T-cell (primary cell): ENCODE measurements at regions of chr3 and their contacts with region 1.

Region 1: DNA sequence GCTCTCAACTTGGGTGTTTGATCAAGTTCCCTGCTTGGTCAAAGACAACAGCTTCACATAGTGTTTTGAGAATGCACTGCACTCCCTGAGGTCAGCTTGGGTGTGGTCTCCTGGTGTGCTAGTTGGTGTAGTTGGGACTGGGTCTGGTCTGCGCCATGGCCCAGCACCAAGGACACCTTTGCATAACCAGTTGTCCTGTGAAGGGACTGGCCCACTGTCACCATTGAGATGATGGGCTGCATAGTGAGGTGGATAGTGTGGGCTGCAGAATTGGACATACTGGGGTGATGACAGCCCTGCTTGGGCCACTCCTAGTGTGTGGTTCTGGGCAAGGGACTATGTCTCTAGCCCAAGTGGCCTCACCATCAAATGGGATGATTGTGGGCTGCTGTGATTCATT is 9.5 kb downstream of the RPSA start:
- DNase-seq: no peak
- ATAC-seq: peak in 1 of 4 experiments; percentile 22
- H3K4me3 ChIP-seq: no peak overlapping the region
- H3K4me3 Mint-ChIP-seq: no peak overlapping the region
- H3K27ac ChIP-seq: no peak overlapping the region
- H3K27ac Mint-ChIP-seq: peak overlapping the region; percentile 46 to 55
- H3K4me1 ChIP-seq: peaks cover 0 to 4% of the 10 kb centered on the region in 2 experiments
- H3K4me1 Mint-ChIP-seq: peaks cover 12 to 23% (median 15%) of the 10 kb centered on the region in 3 donors
- H3K27me3 ChIP-seq: no peaks in the 10 kb centered on the region
- H3K27me3 Mint-ChIP-seq: no peaks in the 10 kb centered on the region

Region 2: GRCh38 chr3:39013289-39013688 is 402.7 kb before region 1 on chr3:
- CTCF ChIA-PET with region 1: interaction called in 1 of 2 experiments, 11 read pairs
- POLR2A ChIA-PET with region 1: no interaction called
- DNase-seq: no peak
- ATAC-seq: no peak
- H3K4me3 ChIP-seq: no peak overlapping the region
- H3K4me3 Mint-ChIP-seq: no peak overlapping the region
- H3K27ac ChIP-seq: no peak overlapping the region
- H3K27ac Mint-ChIP-seq: no peak overlapping the region
- H3K4me1 ChIP-seq: no peaks in the 10 kb centered on the region
- H3K4me1 Mint-ChIP-seq: no peaks in the 10 kb centered on the region
- H3K27me3 ChIP-seq: no peaks in the 10 kb centered on the region
- H3K27me3 Mint-ChIP-seq: peaks cover 17 to 24% of the 10 kb centered on the region in 2 donors